ENCODE measurements at regions of chr2 and their contacts with region 1.

Region 1: GRCh38 chr2:126874981-126875380 is 23.7 kb upstream of the TEX51 start:
- DNase-seq: no peak
- CTCF ChIP-seq: no peak

Region 2: GRCh38 chr2:126858013-126858412 is 17.0 kb before region 1 on chr2:
- CTCF ChIA-PET with region 1: no interaction called
- POLR2A ChIA-PET with region 1: no interaction called
- DNase-seq: no peak
- CTCF ChIP-seq: no peak

Region 3: DNA sequence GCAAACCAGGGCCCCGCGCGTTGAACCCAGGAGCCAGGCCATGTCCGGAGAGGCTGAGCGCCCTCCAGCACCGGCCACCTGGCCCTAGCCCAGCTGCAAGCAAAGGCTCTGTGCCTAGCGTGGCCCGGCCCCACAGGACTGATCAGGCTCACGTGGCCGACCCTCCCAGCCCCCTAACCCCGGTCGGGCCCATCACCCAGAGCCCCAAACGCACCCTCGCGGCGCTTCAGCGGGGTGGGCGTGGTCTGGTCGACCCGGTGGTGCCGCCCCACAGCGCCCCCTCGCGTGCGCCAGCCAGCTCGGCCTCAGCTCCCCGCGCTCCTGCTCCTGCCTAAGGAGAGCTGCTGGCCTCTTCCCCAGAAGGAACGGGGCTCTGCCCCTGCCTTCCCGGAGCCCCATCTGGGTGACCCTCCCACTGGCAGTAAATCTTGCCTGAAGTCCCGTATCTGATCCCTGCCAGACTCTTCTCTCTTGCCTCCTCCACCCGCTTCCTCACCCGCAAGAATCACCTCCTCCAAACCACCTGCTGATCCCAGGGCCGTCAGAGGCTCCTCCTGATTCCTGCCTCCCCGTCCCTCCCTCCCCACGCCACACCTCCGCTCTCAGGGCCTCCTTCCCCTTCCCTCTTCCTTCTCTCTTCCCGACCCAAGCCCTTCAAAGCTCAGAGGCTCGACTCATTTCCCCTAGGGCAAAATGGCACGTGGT is 11.4 kb after region 1 on chr2:
- CTCF ChIA-PET with region 1: interaction called, 16 read pairs
- POLR2A ChIA-PET with region 1: no interaction called
- DNase-seq: peak; percentile 85
- CTCF ChIP-seq: peak; percentile 65

Measured in GM10248 (cell line).